Activated CD4-positive, alpha-beta T cell treated with anti-CD3 and anti-CD28 coated beads, Interleukin-2, amount 10 ng/mL, durations not matched to agents 24 days and 14 days (primary cell): ENCODE measurements at regions of chr2 and their contacts with region 1.

Region 1: DNA sequence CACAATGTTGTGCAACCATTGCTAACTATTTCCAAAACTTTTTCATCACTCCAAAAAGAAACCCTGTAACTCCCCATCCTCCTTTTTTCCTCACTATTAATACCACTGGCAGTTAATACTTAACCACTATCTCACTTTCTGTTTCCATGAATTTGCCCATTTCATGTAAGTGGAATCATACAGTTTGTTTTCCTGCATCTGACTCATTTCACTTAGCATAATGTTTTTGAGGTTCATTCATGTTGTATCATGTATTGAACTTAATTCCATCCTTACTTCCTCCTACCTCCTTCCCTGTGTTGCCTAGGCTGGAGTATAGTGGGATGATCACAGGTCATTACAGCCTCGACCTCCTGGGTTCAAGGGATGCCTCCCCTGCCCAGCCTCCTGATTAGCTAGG is 68.3 kb downstream of the FAM117B start:
- DNase-seq: no peak
- H3K4me3 Mint-ChIP-seq: no peak overlapping the region
- H3K27ac Mint-ChIP-seq: peak overlapping the region; percentile 83
- H3K4me1 Mint-ChIP-seq: peaks cover 43% of the 10 kb centered on the region
- H3K27me3 Mint-ChIP-seq: no peaks in the 10 kb centered on the region

Region 2: GRCh38 chr2:202643012-202643858 is 59.9 kb before region 1 on chr2:
- intact Hi-C with region 1: loop called (anchors 1 kb)
- DNase-seq: peak; percentile 71
- H3K4me3 Mint-ChIP-seq: peak overlapping the region; percentile 73
- H3K27ac Mint-ChIP-seq: peak overlapping the region; percentile 93
- H3K4me1 Mint-ChIP-seq: peaks cover 37% of the 10 kb centered on the region
- H3K27me3 Mint-ChIP-seq: no peaks in the 10 kb centered on the region

Region 3: GRCh38 chr2:202671317-202672035 is 31.6 kb before region 1 on chr2:
- intact Hi-C with region 1: loop called (anchors 2 kb)
- DNase-seq: no peak
- H3K4me3 Mint-ChIP-seq: no peak overlapping the region
- H3K27ac Mint-ChIP-seq: no peak overlapping the region
- H3K4me1 Mint-ChIP-seq: peaks cover 33% of the 10 kb centered on the region
- H3K27me3 Mint-ChIP-seq: no peaks in the 10 kb centered on the region

Region 4: GRCh38 chr2:202750763-202751427 is 47.8 kb after region 1 on chr2:
- intact Hi-C with region 1: loop called (anchors 5 kb)
- DNase-seq: no peak
- H3K4me3 Mint-ChIP-seq: no peak overlapping the region
- H3K27ac Mint-ChIP-seq: no peak overlapping the region
- H3K4me1 Mint-ChIP-seq: peaks cover 6% of the 10 kb centered on the region
- H3K27me3 Mint-ChIP-seq: no peaks in the 10 kb centered on the region

Region 5: GRCh38 chr2:202780514-202781021 is 77.5 kb after region 1 on chr2:
- intact Hi-C with region 1: loop called (anchors 1 kb)
- DNase-seq: no peak
- H3K4me3 Mint-ChIP-seq: no peak overlapping the region
- H3K27ac Mint-ChIP-seq: no peak overlapping the region
- H3K4me1 Mint-ChIP-seq: peaks cover 5% of the 10 kb centered on the region
- H3K27me3 Mint-ChIP-seq: no peaks in the 10 kb centered on the region